ENCODE measurements at regions of chr13 and their contacts with region 1.

Region 1: GRCh38 chr13:75549262-75550158 is at the start of gene UCHL3:
- DNase-seq: peak; percentile 92
- H3K4me3 ChIP-seq: peak within 1 kb of the TSS; percentile 93
- H3K27ac ChIP-seq: peak within 1 kb of the TSS; percentile 85
- H3K27me3 ChIP-seq: no peaks in the 10 kb centered on the region
- CTCF ChIP-seq: peak; percentile 83
- polyA plus RNA-seq, gene UCHL3: 73.1 and 95.5 TPM in 2 replicates

Region 2: GRCh38 chr13:75537401-75538365 is 11.8 kb before region 1 on chr13 and contains the start of gene COMMD6:
- CTCF ChIA-PET with region 1: interaction called, 10 read pairs
- POLR2A ChIA-PET with region 1: interaction called, 35 read pairs
- DNase-seq: peak; percentile 96
- H3K4me3 ChIP-seq: peak within 1 kb of the TSS; percentile 81
- H3K27ac ChIP-seq: peak within 1 kb of the TSS; percentile 69
- H3K27me3 ChIP-seq: no peaks in the 10 kb centered on the region
- CTCF ChIP-seq: peak; percentile 58
- polyA plus RNA-seq, gene COMMD6: 236 and 351 TPM in 2 replicates